ENCODE measurements at regions of chr1 and their contacts with region 1.

Region 1: DNA sequence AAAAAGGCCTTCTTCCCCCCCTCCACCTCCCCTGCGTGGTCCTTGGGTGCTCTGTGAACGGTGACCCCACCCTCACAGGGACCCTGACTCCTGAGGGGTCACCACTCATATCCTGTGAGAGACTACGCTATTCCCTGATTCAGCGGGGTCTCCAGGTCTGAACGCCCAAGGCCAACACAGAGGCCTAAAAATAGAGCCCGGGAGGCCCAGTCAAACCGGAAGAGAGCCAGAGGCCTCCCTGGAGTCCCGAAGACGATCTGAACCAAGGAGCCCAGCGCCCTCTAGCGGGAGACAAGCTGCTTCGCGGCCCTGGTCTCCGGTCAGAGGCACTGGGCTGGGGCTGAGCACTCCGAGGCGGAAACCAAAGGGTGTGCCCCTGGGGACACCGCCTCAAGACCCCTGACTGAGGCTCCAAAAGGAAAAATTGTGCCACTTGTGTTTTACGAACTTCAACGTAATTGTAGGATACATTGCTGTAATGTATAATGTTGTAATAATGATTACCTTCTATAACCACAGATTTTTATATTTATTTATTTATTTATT is 42.4 kb upstream of the PSEN2 start:
- H3K4me3 Mint-ChIP-seq: peak overlapping the region; percentile 21
- H3K27ac Mint-ChIP-seq: peak overlapping the region; percentile 86
- H3K4me1 Mint-ChIP-seq: peaks cover 34% of the 10 kb centered on the region
- H3K27me3 Mint-ChIP-seq: peaks cover 2% of the 10 kb centered on the region

Region 2: DNA sequence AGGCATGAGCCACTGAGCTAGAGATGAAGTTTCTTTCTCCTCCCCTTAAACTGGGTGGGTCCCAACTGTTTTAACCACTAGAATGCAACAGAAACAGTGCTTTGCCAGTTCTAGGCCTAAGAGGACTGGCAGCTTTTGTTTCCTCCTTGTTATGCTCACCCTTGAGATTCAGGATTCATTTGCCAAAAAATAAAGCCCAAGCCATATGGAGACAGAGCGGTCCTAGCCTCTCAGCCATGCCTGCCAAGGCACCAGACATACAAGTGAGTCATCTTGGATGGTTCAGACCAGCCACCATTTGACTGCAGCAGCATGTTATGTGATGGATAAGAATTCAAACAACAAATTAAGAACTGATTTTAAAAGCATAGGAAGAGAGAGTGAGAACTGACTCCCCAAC is 317.6 kb before region 1 on chr1:
- intact Hi-C with region 1: no loop called
- H3K4me3 Mint-ChIP-seq: no peak overlapping the region
- H3K27ac Mint-ChIP-seq: no peak overlapping the region
- H3K4me1 Mint-ChIP-seq: no peaks in the 10 kb centered on the region
- H3K27me3 Mint-ChIP-seq: peaks cover 5% of the 10 kb centered on the region

Region 3: GRCh38 chr1:226547754-226548191 is 280.3 kb before region 1 on chr1:
- intact Hi-C with region 1: loop called (anchors 5 kb)
- H3K4me3 Mint-ChIP-seq: no peak overlapping the region
- H3K27ac Mint-ChIP-seq: no peak overlapping the region
- H3K4me1 Mint-ChIP-seq: peaks cover 20% of the 10 kb centered on the region
- H3K27me3 Mint-ChIP-seq: peaks cover 55% of the 10 kb centered on the region

Region 4: DNA sequence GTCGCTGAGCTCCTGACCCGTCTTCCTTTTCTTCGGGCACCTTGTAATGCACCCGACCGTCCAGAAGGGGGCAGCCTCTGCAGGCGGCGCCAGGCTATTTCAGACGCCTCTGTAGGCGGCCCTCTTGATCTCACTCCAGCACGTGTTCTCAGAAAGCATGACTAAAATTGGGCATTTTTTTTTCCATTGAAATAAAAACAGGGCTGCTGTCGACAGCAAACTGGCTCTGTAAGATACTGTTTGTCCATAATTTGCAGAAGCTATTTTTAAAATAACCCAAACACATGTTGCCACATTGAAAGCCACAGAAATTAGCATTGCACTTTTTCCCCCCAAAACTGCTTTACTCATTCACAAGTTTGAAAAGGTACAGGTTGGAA is 201.5 kb before region 1 on chr1:
- intact Hi-C with region 1: loop called (anchors 1 kb)
- H3K4me3 Mint-ChIP-seq: no peak overlapping the region
- H3K27ac Mint-ChIP-seq: peak overlapping the region; percentile 60
- H3K4me1 Mint-ChIP-seq: peaks cover 29% of the 10 kb centered on the region
- H3K27me3 Mint-ChIP-seq: peaks cover 7% of the 10 kb centered on the region

Region 5: GRCh38 chr1:226634166-226634588 is 193.9 kb before region 1 on chr1:
- intact Hi-C with region 1: loop called (anchors 2 kb)
- H3K4me3 Mint-ChIP-seq: no peak overlapping the region
- H3K27ac Mint-ChIP-seq: peak overlapping the region; percentile 40
- H3K4me1 Mint-ChIP-seq: peaks cover 65% of the 10 kb centered on the region
- H3K27me3 Mint-ChIP-seq: no peaks in the 10 kb centered on the region

Region 6: GRCh38 chr1:226702957-226703831 is 124.8 kb before region 1 on chr1:
- intact Hi-C with region 1: loop called (anchors 5 kb)
- H3K4me3 Mint-ChIP-seq: peak overlapping the region; percentile 72
- H3K27ac Mint-ChIP-seq: peak overlapping the region; percentile 87
- H3K4me1 Mint-ChIP-seq: peaks cover 25% of the 10 kb centered on the region
- H3K27me3 Mint-ChIP-seq: no peaks in the 10 kb centered on the region

Region 7: GRCh38 chr1:226736908-226737818 is 90.9 kb before region 1 on chr1:
- intact Hi-C with region 1: loop called (anchors 2 kb)
- H3K4me3 Mint-ChIP-seq: peak overlapping the region; percentile 91
- H3K27ac Mint-ChIP-seq: peak overlapping the region; percentile 92
- H3K4me1 Mint-ChIP-seq: peaks cover 40% of the 10 kb centered on the region
- H3K27me3 Mint-ChIP-seq: no peaks in the 10 kb centered on the region

Measured in dendritic cell treated with granulocyte-macrophage colony-stimulating factor and Interleukin-4, amounts not matched to agents 40 ng/mL and 50 ng/mL, for 4 days (primary cell).